CD4-positive, alpha-beta T cell (primary cell): ENCODE measurements at regions of chr9 and their contacts with region 1.

Region 1: DNA sequence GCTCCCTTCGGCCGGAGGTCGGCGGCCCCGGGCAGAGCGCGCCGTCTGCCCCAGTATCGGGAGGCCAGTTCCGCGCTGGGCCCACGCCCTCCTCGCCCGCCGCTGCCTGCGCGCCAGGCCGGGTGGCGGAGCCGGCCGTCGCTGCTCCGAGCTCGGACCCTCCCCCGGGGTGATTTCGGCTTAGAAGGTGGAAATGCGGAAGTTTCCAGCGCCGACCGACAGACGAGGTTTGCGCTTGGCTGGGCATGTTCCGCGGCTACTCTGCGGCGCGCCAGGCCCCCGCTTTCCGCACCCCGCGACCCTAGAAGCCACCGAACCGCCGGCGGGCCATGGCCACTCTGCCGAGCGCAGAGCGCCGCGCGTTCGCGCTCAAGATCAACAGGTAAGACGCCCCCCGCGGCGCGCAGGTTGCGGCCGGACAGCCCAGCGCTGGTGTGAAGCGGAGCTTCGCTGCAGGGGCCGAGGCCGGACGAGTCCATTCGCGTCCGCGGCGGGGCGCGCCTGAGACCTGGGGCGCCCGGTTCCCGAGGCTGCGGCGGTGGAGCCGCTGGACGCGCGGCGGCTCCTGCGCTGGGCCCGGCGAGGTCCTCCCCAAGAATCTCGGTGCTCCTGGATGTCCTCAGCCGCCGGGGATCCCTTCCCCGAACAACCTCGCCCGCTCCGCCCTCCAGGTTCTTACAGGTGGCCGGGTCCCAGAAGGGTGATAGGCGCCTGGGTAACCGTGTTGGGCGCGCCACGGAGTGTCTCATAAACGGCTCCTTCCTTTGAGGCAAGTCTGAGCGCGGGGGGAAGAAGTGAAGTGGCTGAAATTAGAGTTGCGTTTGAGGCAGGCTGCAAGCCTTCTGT is at the start of gene DOCK8:
- DNase-seq: peak; percentile 25 to 79 (median 45)
- ATAC-seq: peak; percentile 73
- H3K4me3 ChIP-seq: peak within 1 kb of the TSS; percentile 73
- H3K4me3 Mint-ChIP-seq: peak within 1 kb of the TSS; percentile 89
- H3K27ac ChIP-seq: peak within 1 kb of the TSS in 1 of 2 donors; percentile 23
- H3K27ac Mint-ChIP-seq: peak within 1 kb of the TSS; percentile 13
- H3K4me1 ChIP-seq: peaks cover 11% of the 10 kb centered on the region
- H3K4me1 Mint-ChIP-seq: peaks cover 5% of the 10 kb centered on the region
- H3K27me3 ChIP-seq: no peaks in the 10 kb centered on the region
- H3K27me3 Mint-ChIP-seq: peaks cover 9% of the 10 kb centered on the region
- CTCF ChIP-seq: peak; percentile 20
- total RNA-seq, gene DOCK8: 123 to 126 TPM

Region 2: DNA sequence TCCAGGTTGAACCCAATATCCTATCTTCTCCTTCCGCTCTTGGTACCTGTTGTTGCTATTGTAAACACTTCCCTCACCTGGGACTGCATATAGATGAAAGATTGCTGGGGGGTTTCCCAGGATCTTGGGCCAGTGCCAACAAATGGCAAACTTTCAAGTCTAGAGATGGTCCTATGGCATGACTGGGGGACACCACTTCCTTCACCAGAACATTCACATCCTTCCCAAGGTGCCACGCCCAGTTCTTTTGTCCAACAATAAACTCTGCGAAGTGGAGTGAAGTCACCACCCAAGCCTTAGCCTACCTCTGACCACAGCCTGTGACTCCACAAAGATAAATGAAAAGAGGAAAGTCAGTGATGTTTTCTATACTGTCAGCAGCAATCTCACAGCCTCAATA is 34.2 kb after region 1 on chr9:
- CTCF ChIA-PET with region 1: no interaction called
- POLR2A ChIA-PET with region 1: no interaction called
- intact Hi-C with region 1: no loop called
- DNase-seq: peak in 5 of 14 experiments; percentile 1 to 63 (median 38)
- ATAC-seq: no peak
- H3K4me3 ChIP-seq: no peak overlapping the region
- H3K4me3 Mint-ChIP-seq: no peak overlapping the region
- H3K27ac ChIP-seq: no peak overlapping the region
- H3K27ac Mint-ChIP-seq: no peak overlapping the region
- H3K4me1 ChIP-seq: peaks cover 8% of the 10 kb centered on the region
- H3K4me1 Mint-ChIP-seq: peaks cover 4% of the 10 kb centered on the region
- H3K27me3 ChIP-seq: no peaks in the 10 kb centered on the region
- H3K27me3 Mint-ChIP-seq: peaks cover 4% of the 10 kb centered on the region
- CTCF ChIP-seq: no peak

Region 3: DNA sequence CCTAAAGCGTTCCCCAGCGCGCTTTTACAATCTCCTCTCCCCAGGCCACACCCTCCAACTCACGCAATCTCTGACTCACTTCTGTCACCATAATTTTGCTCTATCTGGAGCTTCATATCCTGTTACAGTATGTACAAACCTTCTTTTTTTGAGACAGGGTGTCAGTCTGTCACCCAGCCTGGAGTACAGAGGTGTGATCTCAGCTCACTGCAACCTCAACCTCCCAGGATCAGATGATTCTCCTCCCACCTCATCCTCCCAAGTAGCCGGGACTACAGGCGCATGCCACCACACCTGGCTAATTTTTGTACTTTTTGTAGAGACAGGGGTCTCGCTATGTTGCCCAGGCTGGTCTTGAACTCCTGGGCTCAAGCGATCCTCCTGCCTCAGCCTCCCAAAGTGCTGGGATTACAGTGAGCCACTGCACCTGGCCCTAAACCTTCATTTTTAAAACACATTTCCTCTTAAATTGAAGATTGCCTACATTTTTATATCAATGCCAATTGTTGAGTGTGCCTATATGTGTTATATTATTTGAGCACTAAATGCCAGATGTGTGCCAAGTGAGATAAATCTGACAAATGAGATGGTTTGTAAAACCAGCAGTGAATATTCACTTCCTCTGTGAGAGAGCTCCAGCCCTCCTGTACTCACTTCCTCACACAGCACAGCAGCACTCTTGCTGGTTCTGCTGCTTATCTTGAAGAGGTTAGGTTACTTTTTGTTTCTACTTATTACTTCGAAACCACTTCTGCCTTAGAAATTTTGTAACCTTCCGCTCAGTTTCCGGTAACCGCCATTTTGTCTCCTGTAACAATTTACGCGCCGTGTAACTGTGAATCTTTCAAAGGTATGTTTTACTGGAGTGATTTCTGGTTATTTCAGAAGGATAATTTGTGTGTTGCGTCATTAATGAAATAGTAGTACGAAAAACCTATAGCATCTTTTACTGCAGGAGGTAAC is 57.7 kb after region 1 on chr9:
- CTCF ChIA-PET with region 1: interaction called, 14 read pairs
- POLR2A ChIA-PET with region 1: interaction called, 36 read pairs
- intact Hi-C with region 1: loop called (anchors 1 to 5 kb)
- DNase-seq: peak; percentile 56 to 92 (median 69)
- ATAC-seq: peak; percentile 83
- H3K4me3 ChIP-seq: peak overlapping the region; percentile 76
- H3K4me3 Mint-ChIP-seq: peak overlapping the region; percentile 92
- H3K27ac ChIP-seq: peak overlapping the region; percentile 94 to 95
- H3K27ac Mint-ChIP-seq: no peak overlapping the region
- H3K4me1 ChIP-seq: peaks cover 55% of the 10 kb centered on the region
- H3K4me1 Mint-ChIP-seq: peaks cover 57% of the 10 kb centered on the region
- H3K27me3 ChIP-seq: no peaks in the 10 kb centered on the region
- H3K27me3 Mint-ChIP-seq: no peaks in the 10 kb centered on the region
- CTCF ChIP-seq: no peak

Region 4: GRCh38 chr9:278651-279050 is 63.8 kb after region 1 on chr9:
- CTCF ChIA-PET with region 1: interaction called, 8 read pairs
- POLR2A ChIA-PET with region 1: interaction called, 36 read pairs
- intact Hi-C with region 1: loop called (anchors 1 to 2 kb)
- DNase-seq: peak in 8 of 14 experiments; percentile 23 to 84 (median 44)
- ATAC-seq: peak; percentile 57
- H3K4me3 ChIP-seq: no peak overlapping the region
- H3K4me3 Mint-ChIP-seq: no peak overlapping the region
- H3K27ac ChIP-seq: peak overlapping the region; percentile 95 to 97
- H3K27ac Mint-ChIP-seq: no peak overlapping the region
- H3K4me1 ChIP-seq: peaks cover 76% of the 10 kb centered on the region
- H3K4me1 Mint-ChIP-seq: peaks cover 44% of the 10 kb centered on the region
- H3K27me3 ChIP-seq: no peaks in the 10 kb centered on the region
- H3K27me3 Mint-ChIP-seq: no peaks in the 10 kb centered on the region
- CTCF ChIP-seq: no peak

Region 5: DNA sequence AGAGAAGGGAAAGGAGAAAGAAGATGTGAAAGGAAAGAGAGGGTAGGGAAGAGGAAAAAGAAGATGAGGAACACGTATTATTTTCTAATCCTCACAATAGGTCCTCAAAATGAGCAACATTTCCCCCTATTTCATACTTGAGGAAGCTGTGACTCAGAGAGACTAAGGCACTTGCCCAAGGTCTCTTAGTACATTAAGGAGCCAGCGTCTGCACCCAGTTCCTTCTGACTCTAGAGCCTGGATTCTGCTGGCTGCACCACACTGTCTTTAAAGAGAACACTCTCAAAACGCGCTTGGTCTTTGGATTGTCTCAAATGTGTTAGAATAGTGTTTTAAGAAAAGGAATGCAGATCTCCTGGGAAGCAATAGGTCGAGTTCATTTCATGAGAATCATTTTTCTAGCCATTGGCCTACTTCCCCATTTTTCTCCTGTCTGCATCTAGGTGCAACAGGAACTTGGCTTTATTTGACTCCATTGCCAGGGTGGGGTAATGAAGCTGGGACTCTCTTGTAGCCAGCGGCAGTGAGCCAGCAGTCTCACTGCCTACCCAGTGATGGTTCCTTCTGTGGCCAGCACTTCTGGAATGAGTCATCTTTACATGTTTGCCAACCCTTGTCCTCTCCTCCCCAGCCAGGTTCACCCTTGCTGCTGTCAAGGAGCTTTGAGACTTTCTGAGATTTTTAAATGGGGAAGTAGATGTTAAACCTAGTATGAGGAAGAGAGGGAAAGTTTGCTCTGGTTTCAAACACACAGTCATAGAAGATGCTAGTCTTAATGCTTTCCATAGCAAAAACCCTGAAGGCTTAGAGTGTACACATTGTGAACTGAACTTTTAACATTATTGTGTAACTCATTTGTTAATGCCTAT is 82.5 kb after region 1 on chr9:
- CTCF ChIA-PET with region 1: interaction called, 13 read pairs
- POLR2A ChIA-PET with region 1: no interaction called
- intact Hi-C with region 1: no loop called
- DNase-seq: peak in 4 of 14 experiments; percentile 40 to 75 (median 53)
- ATAC-seq: peak; percentile 55
- H3K4me3 ChIP-seq: no peak overlapping the region
- H3K4me3 Mint-ChIP-seq: no peak overlapping the region
- H3K27ac ChIP-seq: peak overlapping the region in 1 of 2 donors; percentile 5
- H3K27ac Mint-ChIP-seq: peak overlapping the region; percentile 82
- H3K4me1 ChIP-seq: peaks cover 19% of the 10 kb centered on the region
- H3K4me1 Mint-ChIP-seq: peaks cover 66% of the 10 kb centered on the region
- H3K27me3 ChIP-seq: no peaks in the 10 kb centered on the region
- H3K27me3 Mint-ChIP-seq: no peaks in the 10 kb centered on the region
- CTCF ChIP-seq: no peak